CD14-positive monocyte (primary cell): ENCODE measurements at regions of chr11 and their contacts with region 1.

Region 1: DNA sequence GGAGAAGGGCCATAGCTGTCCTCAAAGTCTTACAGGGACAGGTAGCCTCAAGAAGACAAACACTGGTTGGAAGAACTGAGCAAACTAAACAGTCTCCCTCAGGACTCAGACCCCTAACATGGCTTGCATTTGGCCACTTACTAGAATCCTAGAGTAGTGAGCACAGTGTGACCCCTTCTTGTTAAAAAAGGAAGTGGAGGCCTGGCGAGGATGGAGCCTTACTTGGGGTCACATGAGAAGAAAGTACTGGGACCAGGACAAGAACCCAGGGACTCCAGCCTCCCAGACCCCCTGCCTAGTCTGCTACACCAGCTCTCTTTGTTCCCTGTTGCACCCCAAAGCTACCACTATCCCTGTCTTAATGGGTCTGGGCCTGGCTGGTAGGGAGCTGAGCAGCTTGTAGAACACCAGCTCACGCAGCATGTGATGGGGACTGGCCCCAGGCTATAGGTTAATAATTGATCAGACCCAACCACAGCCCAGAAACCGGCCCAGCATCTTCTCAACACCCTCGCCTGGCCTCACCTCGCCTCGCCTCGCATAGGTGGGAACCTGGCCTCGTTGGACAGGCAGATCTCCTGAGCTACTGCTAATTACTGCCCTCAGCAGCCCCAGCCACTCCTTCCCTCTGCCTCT is 17.6 kb downstream of the DGAT2 start:
- DNase-seq: no peak
- H3K4me3 ChIP-seq: no peak overlapping the region
- H3K4me3 Mint-ChIP-seq: no peak overlapping the region
- H3K27ac ChIP-seq: no peak overlapping the region
- H3K27ac Mint-ChIP-seq: peak overlapping the region in 1 of 7 donors; percentile 61
- H3K4me1 ChIP-seq: peaks cover 8 to 12% of the 10 kb centered on the region in 2 donors
- H3K4me1 Mint-ChIP-seq: peaks cover 13% of the 10 kb centered on the region
- H3K27me3 ChIP-seq: no peaks in the 10 kb centered on the region
- H3K27me3 Mint-ChIP-seq: peaks cover 0 to 2% (median 0%) of the 10 kb centered on the region in 3 donors
- CTCF ChIP-seq: no peak

Region 2: GRCh38 chr11:75721855-75722668 is 64.2 kb before region 1 on chr11:
- intact Hi-C with region 1: no loop called
- DNase-seq: no peak
- H3K4me3 ChIP-seq: no peak overlapping the region
- H3K4me3 Mint-ChIP-seq: no peak overlapping the region
- H3K27ac ChIP-seq: no peak overlapping the region
- H3K27ac Mint-ChIP-seq: no peak overlapping the region
- H3K4me1 ChIP-seq: no peaks in the 10 kb centered on the region
- H3K4me1 Mint-ChIP-seq: no peaks in the 10 kb centered on the region
- H3K27me3 ChIP-seq: no peaks in the 10 kb centered on the region
- H3K27me3 Mint-ChIP-seq: peaks cover 0 to 4% (median 1%) of the 10 kb centered on the region in 3 donors
- CTCF ChIP-seq: no peak

Region 3: DNA sequence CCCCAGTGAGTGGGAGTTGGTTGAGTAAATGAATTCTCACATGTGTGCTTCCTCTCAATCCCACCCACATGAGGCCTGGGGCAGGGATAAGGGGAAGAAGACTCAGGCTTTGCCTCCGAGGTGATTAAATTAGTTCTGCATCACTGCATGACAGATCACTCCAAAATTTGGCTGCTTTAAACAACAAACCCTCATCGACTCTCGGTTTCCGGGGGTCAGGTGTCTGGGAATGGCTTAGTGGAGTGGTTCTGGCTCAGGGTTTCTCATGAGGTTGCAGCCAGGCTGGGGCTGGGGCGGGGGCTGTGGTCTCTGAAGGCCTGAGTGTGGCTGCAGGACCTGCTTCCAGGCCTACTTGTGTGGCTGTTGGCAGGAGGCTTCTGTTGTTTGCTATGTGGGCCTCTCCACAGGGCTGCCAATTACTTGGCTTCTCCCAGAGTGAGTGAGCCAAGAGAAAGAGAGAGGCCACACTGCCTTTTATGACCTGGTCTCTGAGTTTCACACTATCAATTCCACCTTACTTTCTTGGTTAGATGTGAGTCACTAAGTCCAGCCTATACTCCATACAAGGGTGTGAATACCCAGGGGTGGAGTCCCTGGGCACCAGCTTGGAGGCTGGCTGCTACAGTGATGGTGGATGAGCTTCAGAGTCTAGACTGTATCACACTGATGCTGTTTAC is 52.6 kb before region 1 on chr11:
- intact Hi-C with region 1: loop called in 1 of 2 experiments (anchors 10 kb)
- DNase-seq: no peak
- H3K4me3 ChIP-seq: no peak overlapping the region
- H3K4me3 Mint-ChIP-seq: no peak overlapping the region
- H3K27ac ChIP-seq: no peak overlapping the region
- H3K27ac Mint-ChIP-seq: no peak overlapping the region
- H3K4me1 ChIP-seq: no peaks in the 10 kb centered on the region
- H3K4me1 Mint-ChIP-seq: no peaks in the 10 kb centered on the region
- H3K27me3 ChIP-seq: no peaks in the 10 kb centered on the region
- H3K27me3 Mint-ChIP-seq: peaks cover 2 to 5% (median 4%) of the 10 kb centered on the region in 3 donors
- CTCF ChIP-seq: no peak